ENCODE measurements at regions of chr3 and their contacts with region 1.

Region 1: DNA sequence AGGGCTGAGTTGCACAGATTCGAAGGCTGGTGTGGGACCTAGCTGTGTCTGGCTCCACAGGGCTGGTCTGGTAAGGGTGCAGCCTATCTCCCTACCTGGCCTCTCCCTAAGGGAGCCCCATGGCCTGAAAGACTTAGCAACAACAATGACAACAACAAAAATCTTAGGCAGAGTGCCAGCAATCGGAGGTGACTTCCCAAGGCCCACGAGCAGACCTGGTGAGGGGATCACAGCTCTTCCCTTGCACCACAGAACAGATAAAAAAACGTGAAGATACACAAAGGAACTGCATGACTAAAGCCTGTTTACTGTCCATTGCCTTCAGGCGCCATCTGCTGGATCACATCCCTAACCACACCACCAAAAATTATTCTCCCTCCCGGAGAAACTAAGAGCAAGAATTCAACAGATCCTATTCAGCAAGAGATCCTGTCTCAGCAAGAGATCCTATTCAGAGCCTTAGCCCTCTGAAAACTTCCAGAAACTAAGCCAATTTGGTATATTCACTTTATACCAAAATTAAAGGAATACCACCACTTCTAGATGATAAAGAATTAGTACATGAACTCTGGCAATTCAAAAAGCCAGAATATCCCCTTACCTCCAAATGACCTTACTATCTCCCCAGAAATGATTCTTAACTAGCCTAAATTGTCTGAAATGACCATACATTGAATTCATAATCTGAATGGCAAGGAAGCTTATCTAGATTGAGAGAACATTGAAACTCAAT is 24.1 kb upstream of the OR5K4 start:
- DNase-seq: peak; percentile 37 to 59 (median 46)
- ATAC-seq: peak; percentile 65
- H3K4me3 ChIP-seq: no peak overlapping the region
- H3K27ac ChIP-seq: no peak overlapping the region
- H3K4me1 ChIP-seq: peaks cover 9% of the 10 kb centered on the region
- H3K27me3 ChIP-seq: no peaks in the 10 kb centered on the region
- CTCF ChIP-seq: peak; percentile 35 to 79 (median 62)
- POLR2A ChIP-seq: no peak

Region 2: GRCh38 chr3:98039322-98040024 is 290.1 kb before region 1 on chr3:
- intact Hi-C with region 1: loop called (anchors 5 kb)
- DNase-seq: peak; percentile 52 to 78 (median 62)
- ATAC-seq: peak; percentile 92
- H3K4me3 ChIP-seq: no peak overlapping the region
- H3K27ac ChIP-seq: no peak overlapping the region
- H3K4me1 ChIP-seq: peaks cover 5% of the 10 kb centered on the region
- H3K27me3 ChIP-seq: no peaks in the 10 kb centered on the region
- CTCF ChIP-seq: peak; percentile 69 to 97 (median 83)
- POLR2A ChIP-seq: no peak

Region 3: GRCh38 chr3:98246142-98246541 is 83.4 kb before region 1 on chr3:
- intact Hi-C with region 1: no loop called
- DNase-seq: no peak
- ATAC-seq: no peak
- H3K4me3 ChIP-seq: no peak overlapping the region
- H3K27ac ChIP-seq: no peak overlapping the region
- H3K4me1 ChIP-seq: no peaks in the 10 kb centered on the region
- H3K27me3 ChIP-seq: no peaks in the 10 kb centered on the region
- CTCF ChIP-seq: no peak
- POLR2A ChIP-seq: no peak

Region 4: DNA sequence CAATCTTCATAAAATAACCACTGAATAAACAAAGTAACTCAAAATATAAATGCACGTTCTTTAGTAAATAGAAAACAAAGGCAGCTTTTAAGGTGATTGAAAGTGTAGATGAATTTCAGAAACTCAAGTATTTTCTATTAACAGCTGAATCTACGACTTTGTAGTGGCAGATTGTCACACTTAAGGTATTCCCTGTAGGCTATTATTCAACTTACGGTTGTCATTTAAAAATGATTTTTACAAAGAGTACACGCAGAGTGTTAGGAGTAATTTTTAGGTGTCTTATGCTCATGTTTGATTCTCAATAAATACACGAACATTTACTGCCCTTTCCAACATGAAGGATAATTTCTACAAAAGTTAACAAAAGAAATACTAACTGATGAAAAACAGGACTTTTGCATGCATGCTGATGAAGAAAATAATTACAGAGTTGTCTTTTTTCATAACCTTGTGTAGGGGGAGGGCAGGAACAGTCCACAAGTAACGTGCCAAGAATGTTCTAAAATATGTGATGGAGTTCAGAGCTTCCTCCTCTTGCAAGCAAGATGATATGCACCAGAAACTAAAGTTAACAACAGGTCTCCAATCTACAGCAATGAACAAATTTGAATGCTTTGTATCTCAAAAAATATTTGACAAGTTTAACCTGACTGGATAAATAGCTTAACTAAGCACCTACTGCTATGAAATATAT is 555.3 kb after region 1 on chr3:
- intact Hi-C with region 1: no loop called
- DNase-seq: no peak
- ATAC-seq: no peak
- H3K4me3 ChIP-seq: no peak overlapping the region
- H3K27ac ChIP-seq: peak overlapping the region in 3 of 4 donors; percentile 15 to 26 (median 19)
- H3K4me1 ChIP-seq: peaks cover 15% of the 10 kb centered on the region
- H3K27me3 ChIP-seq: no peaks in the 10 kb centered on the region
- CTCF ChIP-seq: no peak
- POLR2A ChIP-seq: no peak

Measured in body of pancreas (tissue), 4 donors.